Gastrocnemius medialis (tissue), 4 donors: ENCODE measurements at regions of chr13 and their contacts with region 1.

Region 1: DNA sequence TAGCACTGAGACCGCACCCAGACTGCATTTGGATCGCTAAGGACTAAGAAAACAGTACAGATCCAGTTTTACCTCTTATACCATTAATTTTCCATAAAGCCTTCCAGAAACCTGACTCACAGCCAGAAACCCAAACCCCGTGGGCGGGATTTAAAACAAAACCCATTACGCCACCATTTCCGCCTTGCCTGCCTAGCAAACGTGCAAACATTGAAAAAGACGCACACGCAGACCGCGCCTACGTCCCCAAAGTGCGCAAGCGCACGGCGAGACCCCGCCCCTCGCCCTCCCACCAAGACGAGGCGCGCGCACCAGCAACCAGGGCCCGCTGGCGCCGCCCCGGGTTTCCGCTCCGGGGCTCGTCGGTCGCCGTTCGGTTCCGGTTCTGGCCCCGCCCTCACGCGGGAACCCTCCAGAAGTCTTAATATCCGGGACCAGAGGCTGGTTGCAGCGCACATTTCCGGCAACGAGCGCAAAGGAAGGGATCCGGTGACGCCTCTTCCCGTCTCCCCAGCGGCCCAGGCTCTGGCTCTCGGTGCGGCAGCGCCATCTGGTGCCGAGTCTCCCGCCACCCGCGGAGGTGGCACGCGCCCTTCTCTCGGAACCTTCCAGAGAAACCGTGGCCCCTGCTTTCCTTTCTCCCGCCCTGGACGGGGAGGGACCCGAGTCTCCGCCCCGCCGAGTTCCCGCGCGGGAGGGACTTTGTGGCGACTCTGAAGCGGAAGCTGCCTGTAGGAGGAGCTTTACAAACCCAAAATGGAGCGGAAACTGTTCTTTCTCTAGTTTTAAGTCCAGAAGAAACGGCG is 256.9 kb upstream of the STARD13 start:
- DNase-seq: peak; percentile 96 to 98
- ATAC-seq: peak; percentile 92 to 95
- H3K4me3 ChIP-seq: peak overlapping the region; percentile 50 to 80 (median 70)
- H3K27ac ChIP-seq: peak overlapping the region; percentile 85 to 99 (median 96)
- H3K4me1 ChIP-seq: peaks cover 27 to 30% of the 10 kb centered on the region in 2 donors
- H3K27me3 ChIP-seq: no peaks in the 10 kb centered on the region
- CTCF ChIP-seq: peak; percentile 87 to 93 (median 92)
- POLR2A ChIP-seq: peak; percentile 42 to 72

Region 2: DNA sequence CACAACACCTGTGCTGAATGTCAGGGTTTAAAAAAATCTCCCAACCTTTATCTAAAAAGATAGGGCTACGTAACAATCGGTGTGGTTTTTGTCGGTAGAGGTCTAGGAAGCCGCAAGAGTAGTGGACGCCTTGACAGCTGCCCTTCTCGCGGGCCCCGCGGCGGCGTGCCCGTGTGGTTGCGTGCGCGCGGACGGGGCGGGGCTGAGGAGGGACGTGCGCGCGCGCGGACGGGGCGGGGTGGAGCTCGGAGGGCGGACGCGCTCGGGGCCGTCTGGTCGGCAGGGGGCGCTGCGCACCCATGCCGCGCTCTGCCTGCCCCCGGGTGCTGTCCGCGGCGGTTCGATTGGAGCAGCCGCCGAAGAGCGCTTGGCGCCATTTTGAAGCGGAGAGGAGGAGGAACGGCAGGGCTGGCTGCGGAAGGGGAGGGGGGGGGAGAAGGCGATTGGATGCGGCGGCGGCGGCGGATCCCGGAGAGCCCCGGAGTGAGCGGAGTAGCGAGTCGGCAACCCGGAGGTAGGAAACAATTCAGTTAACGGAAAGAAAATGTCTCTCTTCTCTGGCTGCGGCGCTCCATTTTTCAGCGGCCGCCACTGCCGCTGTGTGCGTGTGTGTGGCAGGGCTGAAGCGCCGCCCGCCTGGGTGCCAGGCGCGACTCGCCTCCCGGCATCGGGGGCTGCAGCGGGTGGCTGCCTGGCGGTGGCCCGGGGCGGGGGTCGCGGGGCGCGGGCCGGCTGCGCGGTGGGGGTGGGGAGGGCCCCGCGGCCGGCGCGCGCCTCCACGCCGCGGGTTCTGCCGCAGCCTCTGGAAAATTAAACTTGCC is 956.2 kb before region 1 on chr13 and contains the start of gene PDS5B:
- in situ Hi-C with region 1: loop called in 2 of 4 experiments (anchors 25 kb)
- intact Hi-C with region 1: loop called (anchors 1 kb)
- DNase-seq: peak; percentile 91 to 93
- ATAC-seq: peak; percentile 87 to 92
- H3K4me3 ChIP-seq: peak within 1 kb of the TSS; percentile 68 to 83 (median 74)
- H3K27ac ChIP-seq: peak within 1 kb of the TSS; percentile 89 to 94 (median 92)
- H3K4me1 ChIP-seq: peaks cover 27 to 33% of the 10 kb centered on the region in 2 donors
- H3K27me3 ChIP-seq: no peaks in the 10 kb centered on the region
- CTCF ChIP-seq: peak; percentile 80 to 99 (median 98)
- POLR2A ChIP-seq: peak; percentile 56 to 64
- total RNA-seq, gene PDS5B: 18.0 to 27.3 (median 21.2) TPM

Region 3: GRCh38 chr13:33125821-33126570 is 416.5 kb before region 1 on chr13:
- in situ Hi-C with region 1: no loop called
- intact Hi-C with region 1: loop called (anchors 5 kb)
- DNase-seq: peak; percentile 81 to 84
- ATAC-seq: peak; percentile 93 to 94
- H3K4me3 ChIP-seq: peak overlapping the region; percentile 16 to 32 (median 26)
- H3K27ac ChIP-seq: peak overlapping the region; percentile 78 to 85 (median 82)
- H3K4me1 ChIP-seq: peaks cover 42 to 61% of the 10 kb centered on the region in 2 donors
- H3K27me3 ChIP-seq: no peaks in the 10 kb centered on the region
- CTCF ChIP-seq: no peak
- POLR2A ChIP-seq: no peak

Region 4: DNA sequence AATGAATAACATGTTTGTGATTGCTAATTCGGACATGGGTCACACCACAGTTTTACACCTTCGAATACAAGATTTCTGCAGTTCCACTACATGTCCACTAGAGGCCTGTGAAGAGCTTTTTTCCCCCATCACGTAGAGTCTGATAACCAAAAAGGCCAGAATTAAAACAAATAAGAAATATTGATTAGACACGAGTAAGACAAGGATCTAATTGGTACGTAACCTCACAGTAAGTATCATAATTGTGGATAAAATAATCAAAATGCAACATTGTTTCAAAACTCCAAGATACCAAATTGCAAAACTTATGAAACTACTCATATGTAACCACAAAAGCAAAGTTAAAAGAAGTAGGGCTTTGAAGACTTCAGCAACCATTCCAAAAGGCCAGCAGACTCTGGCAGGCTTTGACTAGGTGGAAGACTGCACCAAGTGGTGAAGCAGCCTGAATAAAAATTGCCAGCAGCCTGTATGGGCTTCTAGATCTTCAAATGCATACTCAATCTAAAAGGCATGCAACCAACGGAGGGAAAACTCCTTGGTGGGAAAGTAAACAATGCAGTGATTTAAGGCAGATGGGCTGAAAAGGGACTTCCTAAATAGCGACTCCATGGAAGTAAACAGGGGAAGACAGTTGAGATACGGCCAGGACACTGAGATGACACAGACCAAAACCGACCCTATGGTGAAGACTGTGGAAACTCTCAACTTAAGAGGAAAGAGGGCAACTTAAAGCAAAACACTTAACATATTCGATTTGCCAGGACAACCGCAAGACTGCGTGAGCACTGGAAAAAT is 313.6 kb before region 1 on chr13:
- in situ Hi-C with region 1: loop called in 1 of 4 experiments (anchors 25 kb)
- intact Hi-C with region 1: loop called (anchors 1 kb)
- DNase-seq: no peak
- ATAC-seq: peak; percentile 67 to 74
- H3K4me3 ChIP-seq: no peak overlapping the region
- H3K27ac ChIP-seq: peak overlapping the region; percentile 35 to 63 (median 46)
- H3K4me1 ChIP-seq: peaks cover 12 to 42% of the 10 kb centered on the region in 2 donors
- H3K27me3 ChIP-seq: no peaks in the 10 kb centered on the region
- CTCF ChIP-seq: peak; percentile 84 to 98 (median 91)
- POLR2A ChIP-seq: no peak

Region 5: DNA sequence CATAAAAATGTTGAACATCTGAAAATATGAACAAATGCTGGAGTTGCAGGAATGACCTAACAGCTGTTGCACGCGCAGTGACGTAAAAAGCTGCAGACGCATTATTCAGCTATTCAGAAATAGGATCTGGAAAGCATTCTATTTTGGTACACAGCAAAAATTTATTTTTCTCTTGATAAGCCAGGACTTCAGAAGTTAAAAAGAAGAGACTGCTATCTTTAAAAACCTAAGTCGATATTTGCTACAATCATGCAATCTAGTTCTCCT is 220.0 kb before region 1 on chr13:
- in situ Hi-C with region 1: no loop called
- intact Hi-C with region 1: loop called (anchors 2 kb)
- DNase-seq: peak; percentile 16 to 29
- ATAC-seq: peak; percentile 60 to 70
- H3K4me3 ChIP-seq: peak overlapping the region; percentile 7 to 30 (median 18)
- H3K27ac ChIP-seq: peak overlapping the region; percentile 28 to 76 (median 52)
- H3K4me1 ChIP-seq: peaks cover 0 to 20% of the 10 kb centered on the region in 2 donors
- H3K27me3 ChIP-seq: no peaks in the 10 kb centered on the region
- CTCF ChIP-seq: no peak
- POLR2A ChIP-seq: no peak

Region 6: GRCh38 chr13:33334831-33335230 is 207.7 kb before region 1 on chr13:
- in situ Hi-C with region 1: no loop called
- intact Hi-C with region 1: no loop called
- DNase-seq: no peak
- ATAC-seq: no peak
- H3K4me3 ChIP-seq: no peak overlapping the region
- H3K27ac ChIP-seq: no peak overlapping the region
- H3K4me1 ChIP-seq: no peaks in the 10 kb centered on the region
- H3K27me3 ChIP-seq: no peaks in the 10 kb centered on the region
- CTCF ChIP-seq: no peak
- POLR2A ChIP-seq: no peak

Region 7: DNA sequence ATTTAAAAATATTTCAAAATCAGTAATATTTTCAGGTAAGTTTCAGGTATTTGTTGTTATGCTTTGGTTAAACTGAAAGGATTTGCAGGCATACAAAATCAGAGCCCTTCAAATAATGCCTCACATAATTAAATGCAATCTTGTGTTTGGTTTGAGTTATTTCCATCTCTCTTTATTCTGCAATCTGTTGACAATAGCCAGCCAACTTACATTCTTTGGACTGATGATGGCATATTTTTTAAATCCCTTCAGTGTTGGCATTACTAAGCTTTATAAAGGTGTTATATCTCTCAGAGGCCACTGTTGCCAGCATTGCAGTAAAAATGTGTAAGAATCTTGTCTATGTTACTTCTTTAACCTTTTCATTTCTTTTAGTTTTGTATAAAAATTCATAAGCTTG is 18.2 kb after region 1 on chr13:
- in situ Hi-C with region 1: no loop called
- intact Hi-C with region 1: no loop called
- DNase-seq: no peak
- ATAC-seq: no peak
- H3K4me3 ChIP-seq: no peak overlapping the region
- H3K27ac ChIP-seq: no peak overlapping the region
- H3K4me1 ChIP-seq: peaks cover 0 to 5% of the 10 kb centered on the region in 2 donors
- H3K27me3 ChIP-seq: no peaks in the 10 kb centered on the region
- CTCF ChIP-seq: no peak
- POLR2A ChIP-seq: no peak

Region 8: DNA sequence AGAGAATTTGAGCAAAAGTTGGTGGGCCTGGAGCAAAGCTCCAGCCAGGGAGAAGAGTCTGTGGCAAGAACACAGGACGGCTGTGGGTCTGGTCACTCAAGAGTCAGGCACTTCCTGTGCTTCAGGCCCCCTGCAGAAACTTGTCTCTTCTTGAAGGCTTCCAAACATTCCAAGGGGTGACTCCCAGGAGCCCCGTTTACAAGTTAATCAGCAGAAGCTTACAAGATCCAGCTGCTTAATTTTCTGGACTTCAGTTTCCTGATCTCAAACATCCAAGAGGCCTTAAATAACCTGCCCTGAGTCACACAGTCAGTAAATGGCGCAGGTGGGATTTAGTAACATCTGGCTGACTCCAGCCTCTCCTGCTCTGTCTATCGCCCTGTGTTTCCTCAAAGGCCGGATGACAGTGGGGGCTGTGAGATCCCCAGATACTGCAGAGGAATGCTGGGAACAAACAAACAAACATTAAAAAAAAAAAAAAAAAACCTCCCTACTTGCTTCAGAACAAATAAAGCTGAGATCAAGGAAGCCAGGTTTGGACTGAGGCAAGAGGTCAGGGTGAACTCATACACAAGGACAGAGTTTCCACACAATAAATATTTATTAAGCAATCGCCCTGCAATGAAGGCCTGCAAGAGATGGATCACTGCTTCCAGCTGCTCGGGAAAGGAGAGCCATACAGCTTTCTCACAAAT is 100.0 kb after region 1 on chr13:
- in situ Hi-C with region 1: no loop called
- intact Hi-C with region 1: loop called (anchors 2 kb)
- DNase-seq: peak; percentile 52 to 75
- ATAC-seq: peak; percentile 78 to 88
- H3K4me3 ChIP-seq: no peak overlapping the region
- H3K27ac ChIP-seq: peak overlapping the region; percentile 66 to 76 (median 74)
- H3K4me1 ChIP-seq: peaks cover 18 to 47% of the 10 kb centered on the region in 2 donors
- H3K27me3 ChIP-seq: no peaks in the 10 kb centered on the region
- CTCF ChIP-seq: no peak
- POLR2A ChIP-seq: no peak

Region 9: GRCh38 chr13:33931397-33932311 is 389.2 kb after region 1 on chr13:
- in situ Hi-C with region 1: no loop called
- intact Hi-C with region 1: no loop called
- DNase-seq: no peak
- ATAC-seq: no peak
- H3K4me3 ChIP-seq: no peak overlapping the region
- H3K27ac ChIP-seq: no peak overlapping the region
- H3K4me1 ChIP-seq: peaks cover 0 to 5% of the 10 kb centered on the region in 2 donors
- H3K27me3 ChIP-seq: no peaks in the 10 kb centered on the region
- CTCF ChIP-seq: peak in 3 of 5 experiments; percentile 20 to 30 (median 27)
- POLR2A ChIP-seq: no peak

Region 10: DNA sequence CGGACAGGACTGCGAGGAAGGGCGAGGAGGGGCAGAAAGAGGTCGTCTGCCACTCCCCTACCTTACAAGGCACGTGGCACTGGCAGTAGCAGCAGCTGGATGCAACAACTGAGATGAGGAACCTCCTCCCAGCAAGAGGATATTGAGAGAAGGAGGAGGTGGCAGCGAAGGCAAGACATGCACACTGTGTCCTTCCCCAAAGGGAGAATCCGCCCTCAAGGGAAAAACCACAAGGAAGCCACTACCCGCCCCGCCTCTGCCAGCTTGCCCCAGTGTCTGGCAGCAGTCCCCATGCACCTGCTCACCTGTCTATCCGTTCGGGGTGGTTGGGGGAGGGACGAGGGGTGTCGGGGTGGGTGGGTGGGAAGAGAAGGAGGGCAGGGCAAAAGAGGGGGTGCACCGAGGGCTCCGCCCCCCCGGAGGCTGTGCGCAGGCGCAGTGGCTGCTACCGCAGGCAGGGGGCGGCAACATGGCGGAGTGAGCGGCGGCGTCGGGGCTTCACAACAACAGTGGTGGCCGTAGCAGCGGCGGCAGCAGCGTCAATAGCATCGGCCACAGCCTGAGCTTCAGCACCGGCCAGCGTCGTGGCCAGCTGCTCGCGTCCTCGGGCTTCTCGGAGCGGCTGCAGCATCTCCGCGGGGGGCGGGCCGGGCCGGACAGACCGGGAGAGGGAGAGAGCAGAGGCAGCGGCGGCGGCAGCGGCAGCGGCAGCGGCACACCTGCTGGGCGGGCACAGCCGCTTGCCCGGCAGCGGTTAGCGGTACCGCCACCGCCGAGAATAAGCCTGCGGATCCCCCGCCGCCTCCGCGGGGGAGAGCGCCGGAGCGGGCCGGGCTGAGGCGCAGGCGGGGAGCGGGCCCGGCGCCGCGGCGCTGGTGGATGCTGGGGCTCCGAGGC is 1399.6 kb after region 1 on chr13 and contains the start of gene NBEA:
- in situ Hi-C with region 1: no loop called
- intact Hi-C with region 1: loop called (anchors 10 kb)
- DNase-seq: peak; percentile 39 to 48
- ATAC-seq: peak; percentile 70 to 80
- H3K4me3 ChIP-seq: peak within 1 kb of the TSS; percentile 72 to 95 (median 84)
- H3K27ac ChIP-seq: peak within 1 kb of the TSS; percentile 74 to 81 (median 77)
- H3K4me1 ChIP-seq: peaks cover 7 to 12% of the 10 kb centered on the region in 2 donors
- H3K27me3 ChIP-seq: no peaks in the 10 kb centered on the region
- CTCF ChIP-seq: peak in 3 of 5 experiments; percentile 27 to 62 (median 58)
- POLR2A ChIP-seq: peak in 1 of 2 donors; percentile 43
- total RNA-seq, gene NBEA: 4.1 to 5.1 (median 4.7) TPM